Caco-2 (cell line): ENCODE measurements at regions of chr2 and their contacts with region 1.

Region 1: GRCh38 chr2:20077466-20077865 is 26.0 kb upstream of the LAPTM4A start:
- DNase-seq: peak in 1 of 2 experiments; percentile 31
- H3K4me3 ChIP-seq: no peak overlapping the region
- H3K4me3 Mint-ChIP-seq: no peak overlapping the region
- H3K27ac Mint-ChIP-seq: no peak overlapping the region
- H3K4me1 ChIP-seq: peaks cover 9% of the 10 kb centered on the region
- H3K4me1 Mint-ChIP-seq: peaks cover 8% of the 10 kb centered on the region
- H3K27me3 ChIP-seq: no peaks in the 10 kb centered on the region
- H3K27me3 Mint-ChIP-seq: no peaks in the 10 kb centered on the region
- CTCF ChIP-seq: peak in 1 of 2 experiments; percentile 39

Region 2: DNA sequence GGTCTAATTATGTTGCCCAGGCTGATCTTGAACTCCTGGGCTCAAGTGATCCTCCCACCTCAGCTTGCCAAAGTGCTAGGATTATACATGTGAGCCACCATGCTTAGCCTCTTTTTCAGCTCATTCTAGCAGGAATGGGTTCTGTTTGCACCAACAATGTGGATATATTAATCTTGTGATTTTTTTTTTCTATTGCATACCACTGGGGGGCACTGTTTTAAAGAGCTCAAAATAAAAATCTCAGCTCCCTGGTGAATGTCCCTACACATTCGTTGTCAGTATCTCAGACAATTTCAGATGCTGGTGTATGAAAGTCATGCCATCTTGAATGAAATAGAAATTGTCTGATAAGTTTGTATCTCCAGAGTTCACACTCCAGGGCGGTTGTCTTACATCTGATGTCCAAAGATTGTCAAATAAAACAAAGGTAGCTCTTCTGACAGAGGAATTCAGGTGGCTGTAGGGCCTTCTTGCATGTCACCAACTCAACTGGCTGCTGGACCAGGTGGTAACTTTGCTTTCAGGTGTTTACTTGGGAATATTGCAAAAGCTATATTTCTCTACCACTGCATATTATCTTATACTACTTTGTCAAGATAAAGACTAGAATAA is 61.9 kb before region 1 on chr2:
- CTCF ChIA-PET with region 1: interaction called, 12 read pairs
- POLR2A ChIA-PET with region 1: no interaction called
- intact Hi-C with region 1: no loop called
- DNase-seq: peak in 1 of 2 experiments; percentile 64
- H3K4me3 ChIP-seq: no peak overlapping the region
- H3K4me3 Mint-ChIP-seq: no peak overlapping the region
- H3K27ac Mint-ChIP-seq: no peak overlapping the region
- H3K4me1 ChIP-seq: peaks cover 17% of the 10 kb centered on the region
- H3K4me1 Mint-ChIP-seq: peaks cover 20% of the 10 kb centered on the region
- H3K27me3 ChIP-seq: no peaks in the 10 kb centered on the region
- H3K27me3 Mint-ChIP-seq: no peaks in the 10 kb centered on the region
- CTCF ChIP-seq: peak; percentile 54 to 61